ENCODE measurements at regions of chr1 and their contacts with region 1.

Region 1: DNA sequence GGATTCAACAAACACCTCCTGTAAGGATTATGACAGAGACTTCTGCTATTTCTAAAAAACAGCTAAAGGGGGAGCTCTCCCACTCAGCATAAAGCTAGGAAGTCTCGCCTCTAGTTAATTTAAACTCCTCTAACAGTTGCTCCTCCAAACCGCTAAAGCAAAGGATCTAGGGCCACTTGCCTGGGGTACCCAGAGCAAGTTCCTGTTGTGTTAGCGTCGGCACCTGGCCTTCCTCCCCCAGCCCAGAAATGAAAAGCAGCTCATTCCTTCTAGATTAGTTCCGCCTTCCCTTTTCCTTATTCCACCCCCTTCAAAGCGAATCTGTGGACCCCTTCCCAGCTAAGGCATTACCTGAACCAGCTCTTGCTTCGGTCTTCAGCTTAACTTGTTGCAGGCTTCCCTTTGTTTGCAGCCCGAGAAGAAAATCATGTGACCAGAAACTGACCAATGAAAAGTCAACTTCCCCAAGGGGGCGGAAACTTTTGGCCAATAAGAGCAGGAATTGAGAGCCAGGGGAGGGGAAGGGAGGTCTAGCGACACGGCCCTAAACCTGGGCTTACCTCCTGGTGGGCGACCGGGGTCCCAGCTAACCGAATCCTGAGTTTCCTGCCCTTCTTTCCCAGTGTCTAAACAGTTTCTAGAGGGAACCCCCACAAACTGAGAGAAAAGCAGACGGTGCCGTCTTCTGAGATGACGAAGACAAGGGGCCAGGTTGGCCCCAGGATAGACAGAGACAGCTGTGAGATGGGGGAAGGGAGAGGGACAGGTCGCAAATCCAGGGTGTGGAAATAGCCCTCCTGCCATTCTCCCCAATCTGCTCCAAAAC is at the start of gene PBXIP1:
- DNase-seq: peak; percentile 91
- ATAC-seq: peak; percentile 47
- H3K4me3 Mint-ChIP-seq: peak within 1 kb of the TSS; percentile 91
- H3K27ac Mint-ChIP-seq: peak within 1 kb of the TSS; percentile 96
- H3K4me1 Mint-ChIP-seq: peaks cover 80% of the 10 kb centered on the region
- H3K27me3 Mint-ChIP-seq: no peaks in the 10 kb centered on the region
- total RNA-seq, gene PBXIP1: 44.5 to 48.2 TPM

Region 2: DNA sequence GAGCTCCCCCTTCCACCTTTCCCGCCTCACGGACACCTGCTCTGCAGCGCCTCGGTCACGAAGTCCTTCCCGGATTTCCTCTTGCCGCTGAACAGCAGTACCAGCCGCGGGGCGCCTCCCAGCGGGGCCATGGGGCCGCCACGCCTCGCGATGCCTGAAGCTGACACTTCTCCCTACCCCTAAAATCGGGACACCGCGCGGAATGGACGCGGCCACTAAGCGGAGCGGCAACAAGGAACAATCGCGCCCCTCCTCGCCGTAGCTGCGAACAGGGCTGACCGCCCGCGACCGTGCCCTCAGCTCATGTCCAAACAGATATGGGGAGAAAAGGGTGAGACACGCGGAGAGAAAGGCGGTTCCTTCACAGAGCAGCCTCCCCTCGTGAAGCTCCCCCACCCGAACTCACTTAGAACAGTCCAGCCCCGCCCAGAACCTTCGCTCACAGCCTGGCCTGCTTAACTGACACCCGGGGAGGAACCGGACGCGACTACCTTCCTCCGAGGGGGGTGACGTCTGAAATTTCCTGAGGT is 19.3 kb before region 1 on chr1 and contains the start of gene PMVK:
- CTCF ChIA-PET with region 1: interaction called, 3 read pairs
- POLR2A ChIA-PET with region 1: interaction called, 77 read pairs
- DNase-seq: peak; percentile 98
- ATAC-seq: peak; percentile 86
- H3K4me3 Mint-ChIP-seq: peak within 1 kb of the TSS; percentile 95
- H3K27ac Mint-ChIP-seq: peak within 1 kb of the TSS; percentile 96
- H3K4me1 Mint-ChIP-seq: peaks cover 56% of the 10 kb centered on the region
- H3K27me3 Mint-ChIP-seq: no peaks in the 10 kb centered on the region
- total RNA-seq, gene PMVK: 40.9 to 43.8 TPM

Region 3: GRCh38 chr1:154974063-154974807 is 18.3 kb after region 1 on chr1 and contains the start of gene CKS1B:
- CTCF ChIA-PET with region 1: interaction called, 20 read pairs
- POLR2A ChIA-PET with region 1: interaction called, 31 read pairs
- DNase-seq: peak; percentile 98
- ATAC-seq: peak; percentile 91
- H3K4me3 Mint-ChIP-seq: no peak within 1 kb of the TSS
- H3K27ac Mint-ChIP-seq: no peak within 1 kb of the TSS
- H3K4me1 Mint-ChIP-seq: peaks cover 40% of the 10 kb centered on the region
- H3K27me3 Mint-ChIP-seq: no peaks in the 10 kb centered on the region
- total RNA-seq, gene CKS1B: 151 to 153 TPM

Region 4: GRCh38 chr1:154992721-154993571 is 37.0 kb after region 1 on chr1:
- CTCF ChIA-PET with region 1: interaction called, 10 read pairs
- POLR2A ChIA-PET with region 1: no interaction called
- DNase-seq: no peak
- ATAC-seq: no peak
- H3K4me3 Mint-ChIP-seq: no peak overlapping the region
- H3K27ac Mint-ChIP-seq: no peak overlapping the region
- H3K4me1 Mint-ChIP-seq: peaks cover 27% of the 10 kb centered on the region
- H3K27me3 Mint-ChIP-seq: no peaks in the 10 kb centered on the region

Region 5: DNA sequence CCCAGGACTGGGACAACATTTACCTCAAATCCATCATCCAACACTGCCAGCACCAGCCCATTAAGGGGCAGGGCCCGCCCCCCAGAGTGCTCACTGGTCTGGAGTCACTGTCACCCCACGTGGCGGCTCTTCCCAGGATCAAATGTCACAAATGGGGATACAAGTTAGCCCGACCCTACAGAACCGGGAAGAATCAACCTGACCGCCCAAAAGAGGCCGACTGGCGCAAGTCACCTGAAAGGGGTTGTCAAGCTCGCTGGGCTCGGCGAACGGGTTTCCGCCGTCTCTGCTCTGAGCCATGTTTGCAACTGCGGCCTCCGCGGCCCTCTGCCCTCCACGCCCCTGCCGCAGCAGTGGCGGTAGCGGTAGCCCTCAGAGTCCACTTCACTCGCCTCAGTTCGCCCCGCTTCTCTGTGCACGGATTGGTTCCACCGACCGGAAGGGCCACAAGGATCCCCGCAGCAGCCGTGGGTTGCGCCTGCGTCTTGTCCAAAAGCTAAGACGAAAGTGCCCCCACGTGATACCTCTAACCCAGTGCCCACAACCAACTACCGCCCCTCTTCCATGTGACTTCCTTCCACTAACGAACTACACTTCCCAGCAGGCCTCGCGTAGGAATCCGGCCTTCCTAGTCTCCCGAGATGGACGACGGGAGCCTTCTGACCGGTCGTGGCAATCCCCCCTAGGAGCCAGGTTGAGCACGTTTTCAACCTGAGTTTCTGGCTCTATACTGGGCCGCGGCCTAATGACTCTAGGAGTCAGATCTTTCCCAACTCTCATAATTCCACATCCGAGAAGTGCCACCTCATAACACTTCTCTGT is 306.1 kb after region 1 on chr1 and contains the start of gene SCAMP3:
- CTCF ChIA-PET with region 1: no interaction called
- POLR2A ChIA-PET with region 1: no interaction called
- DNase-seq: peak; percentile 94
- ATAC-seq: peak; percentile 95
- H3K4me3 Mint-ChIP-seq: peak within 1 kb of the TSS; percentile 98
- H3K27ac Mint-ChIP-seq: peak within 1 kb of the TSS; percentile 93
- H3K4me1 Mint-ChIP-seq: peaks cover 42% of the 10 kb centered on the region
- H3K27me3 Mint-ChIP-seq: no peaks in the 10 kb centered on the region
- total RNA-seq, gene SCAMP3: 77.9 to 84.2 TPM

Measured in activated CD8-positive, alpha-beta T cell treated with anti-CD3 and anti-CD28 coated beads, Interleukin-2, amount 10 ng/mL, durations not matched to agents 7 days and 5 days (primary cell).